Activated CD8-positive, alpha-beta memory T cell treated with anti-CD3 and anti-CD28 coated beads, Interleukin-2, amount 10 ng/mL, durations not matched to agents 7 days and 5 days (primary cell): ENCODE measurements at regions of chr11 and their contacts with region 1.

Region 1: DNA sequence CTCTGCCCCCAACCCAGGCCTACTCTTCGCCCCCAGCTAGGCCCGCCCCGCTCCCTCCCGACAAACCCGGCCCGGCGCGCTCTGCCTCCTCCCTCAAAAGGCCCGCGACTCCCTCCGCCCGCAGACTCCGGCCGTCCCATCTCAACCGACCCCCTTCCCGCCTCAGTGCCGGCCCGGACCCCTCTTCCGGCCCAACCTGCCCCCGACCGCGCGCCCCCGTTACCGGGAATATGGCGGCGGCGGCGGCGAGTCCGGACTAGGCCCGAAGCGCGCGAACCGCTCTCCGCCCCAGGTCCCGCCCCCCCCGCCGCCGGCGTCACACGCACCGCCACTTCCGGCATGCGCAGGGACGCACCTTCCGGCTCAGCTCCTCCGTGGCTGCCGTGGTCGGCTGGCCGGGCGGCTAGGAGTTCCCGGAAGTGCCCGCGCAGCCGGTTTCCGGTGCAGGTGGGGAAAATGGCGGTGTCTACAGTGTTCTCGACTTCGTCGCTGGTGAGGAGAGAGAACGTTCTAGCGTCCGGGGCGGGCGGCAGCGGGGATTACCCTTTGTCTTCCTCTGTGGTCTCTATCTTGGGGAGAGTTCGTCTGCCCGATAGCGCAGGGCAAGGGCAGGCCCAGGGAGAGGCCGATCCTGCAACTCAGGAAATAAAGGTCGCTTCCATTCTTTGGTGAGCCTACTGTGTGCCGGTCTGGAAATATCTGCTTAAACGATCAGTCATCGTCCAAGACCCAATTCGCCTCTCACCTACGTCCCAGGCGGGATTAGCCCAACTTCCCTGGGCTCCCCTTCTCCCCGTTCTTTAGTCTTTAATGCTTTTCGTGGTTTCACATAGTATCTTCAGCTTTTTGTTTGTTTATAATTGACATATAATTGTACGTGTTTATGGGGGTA is at the starts of genes CPSF7 and SDHAF2:
- DNase-seq: peak; percentile 98
- ATAC-seq: peak; percentile 88
- H3K4me3 Mint-ChIP-seq: peak within 1 kb of the TSS; percentile 98
- H3K27ac Mint-ChIP-seq: peak within 1 kb of the TSS; percentile 100
- H3K4me1 Mint-ChIP-seq: peaks cover 61% of the 10 kb centered on the region
- H3K27me3 Mint-ChIP-seq: no peaks in the 10 kb centered on the region
- total RNA-seq, gene CPSF7: 103 to 118 TPM
- total RNA-seq, gene SDHAF2: 37.6 to 57.6 TPM

Region 2: DNA sequence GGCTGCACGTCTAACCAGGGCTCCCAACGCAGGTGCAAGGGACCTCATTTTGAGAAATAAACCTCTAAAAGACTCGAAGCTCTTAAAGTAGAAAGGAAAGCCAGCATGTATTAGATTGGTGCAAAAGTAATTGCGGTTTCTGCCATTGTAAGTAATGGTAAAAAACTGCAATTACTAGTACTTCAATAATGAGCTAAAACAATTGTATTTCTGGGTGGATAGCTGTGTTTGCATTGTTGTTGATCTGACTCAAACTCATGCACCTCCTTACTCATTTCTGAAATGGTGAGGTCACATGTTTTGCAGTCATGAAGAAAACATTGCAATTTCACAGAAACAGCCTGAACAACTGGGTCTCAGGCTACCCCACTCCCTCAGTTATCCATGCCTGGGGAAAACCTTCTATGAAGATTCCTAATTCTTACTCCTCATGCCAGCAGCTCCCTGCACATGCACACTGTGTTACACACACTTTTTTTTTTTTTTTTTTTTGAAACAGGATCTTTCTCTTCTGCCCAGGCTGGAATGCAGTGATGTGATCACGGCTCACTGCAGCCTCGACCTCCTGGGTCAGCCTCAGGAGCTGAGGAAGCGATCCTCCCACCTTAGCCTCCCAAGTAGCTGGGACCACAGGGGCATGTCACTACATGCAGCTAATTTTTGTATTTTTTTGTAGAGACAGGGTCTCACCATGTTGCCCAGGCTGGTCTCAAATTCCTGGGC is 159.4 kb before region 1 on chr11:
- CTCF ChIA-PET with region 1: no interaction called
- DNase-seq: no peak
- ATAC-seq: peak; percentile 72
- H3K4me3 Mint-ChIP-seq: no peak overlapping the region
- H3K27ac Mint-ChIP-seq: peak overlapping the region; percentile 56
- H3K4me1 Mint-ChIP-seq: peaks cover 13% of the 10 kb centered on the region
- H3K27me3 Mint-ChIP-seq: no peaks in the 10 kb centered on the region

Region 3: DNA sequence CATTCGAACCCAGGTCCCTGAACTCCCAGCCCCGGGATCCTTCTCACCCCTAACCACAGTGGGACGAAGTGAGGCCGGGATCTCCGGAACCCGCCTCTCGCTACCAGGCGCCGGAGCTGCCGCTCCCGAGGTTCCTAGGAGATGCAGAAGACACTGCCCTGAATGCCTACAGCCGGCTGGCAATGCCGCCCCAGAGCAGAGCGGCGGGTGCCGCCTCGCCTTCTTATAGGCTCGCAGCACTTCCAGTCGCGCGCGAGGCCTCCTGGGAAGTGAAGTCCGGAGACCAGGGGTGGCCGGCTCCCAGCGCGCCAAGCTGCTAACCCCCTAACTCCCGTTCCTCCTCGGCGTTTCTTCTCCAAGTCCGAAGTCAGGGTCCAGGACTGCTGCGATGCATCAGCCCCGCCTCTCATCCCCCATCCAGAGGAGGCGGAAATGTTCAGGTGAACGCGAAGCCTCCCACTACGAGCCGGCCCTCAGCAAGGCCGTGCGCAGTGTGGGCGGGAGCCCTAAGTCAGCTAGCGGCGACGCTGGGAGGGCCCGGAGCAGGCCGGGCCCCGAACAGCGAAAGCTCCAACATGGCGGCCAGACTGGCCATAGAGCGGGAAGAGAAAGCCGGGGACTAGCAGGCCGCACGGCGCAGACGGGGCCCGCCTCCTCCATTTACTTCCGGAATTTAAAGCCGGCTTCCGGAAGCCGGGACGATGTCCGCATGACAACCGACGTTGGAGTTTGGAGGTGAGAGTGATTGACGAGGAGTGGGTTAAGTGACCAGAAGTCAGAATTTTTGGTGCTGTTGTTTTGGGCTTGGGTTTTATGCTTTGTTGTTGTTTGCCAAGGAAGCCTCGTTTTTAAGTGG is 68.0 kb before region 1 on chr11 and contains the starts of genes CYB561A3 and TMEM138:
- CTCF ChIA-PET with region 1: interaction called, 10 read pairs
- DNase-seq: peak; percentile 96
- ATAC-seq: peak; percentile 95
- H3K4me3 Mint-ChIP-seq: peak within 1 kb of the TSS; percentile 99
- H3K27ac Mint-ChIP-seq: peak within 1 kb of the TSS; percentile 98
- H3K4me1 Mint-ChIP-seq: peaks cover 40% of the 10 kb centered on the region
- H3K27me3 Mint-ChIP-seq: no peaks in the 10 kb centered on the region
- total RNA-seq, gene CYB561A3: 43.9 to 51.2 TPM
- total RNA-seq, gene TMEM138: 48.3 to 60.6 TPM

Region 4: DNA sequence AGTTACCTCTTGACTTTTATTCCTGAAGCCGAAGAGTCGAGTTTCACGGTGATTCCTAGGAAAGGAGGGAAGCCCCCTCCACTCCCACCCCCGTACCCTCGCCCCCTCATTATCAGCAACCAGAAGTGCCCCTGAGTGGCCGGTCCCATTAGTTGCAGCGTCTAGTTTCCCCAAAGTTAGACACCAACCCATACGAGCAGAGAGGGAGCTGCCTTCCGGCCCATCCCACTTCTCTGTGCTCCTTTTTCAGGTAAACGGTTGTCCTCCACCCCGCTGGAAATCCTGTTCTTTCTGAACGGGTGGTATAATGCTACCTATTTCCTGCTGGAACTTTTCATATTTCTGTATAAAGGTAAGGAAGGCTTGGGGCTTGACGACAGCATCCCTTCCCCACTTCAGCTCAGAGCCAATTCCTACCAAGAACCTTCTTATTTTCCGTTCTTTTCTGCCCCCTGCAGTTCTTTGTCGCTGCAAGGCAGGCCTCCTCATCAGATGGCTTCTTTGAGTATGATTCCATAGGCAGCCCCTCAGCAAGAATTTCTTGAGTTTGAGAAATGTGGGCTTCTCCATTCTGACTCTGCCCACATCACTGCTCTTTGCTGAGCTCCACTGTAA is 36.8 kb before region 1 on chr11:
- CTCF ChIA-PET with region 1: interaction called, 11 read pairs
- DNase-seq: no peak
- ATAC-seq: no peak
- H3K4me3 Mint-ChIP-seq: peak overlapping the region; percentile 90
- H3K27ac Mint-ChIP-seq: peak overlapping the region; percentile 96
- H3K4me1 Mint-ChIP-seq: peaks cover 22% of the 10 kb centered on the region
- H3K27me3 Mint-ChIP-seq: no peaks in the 10 kb centered on the region

Region 5: DNA sequence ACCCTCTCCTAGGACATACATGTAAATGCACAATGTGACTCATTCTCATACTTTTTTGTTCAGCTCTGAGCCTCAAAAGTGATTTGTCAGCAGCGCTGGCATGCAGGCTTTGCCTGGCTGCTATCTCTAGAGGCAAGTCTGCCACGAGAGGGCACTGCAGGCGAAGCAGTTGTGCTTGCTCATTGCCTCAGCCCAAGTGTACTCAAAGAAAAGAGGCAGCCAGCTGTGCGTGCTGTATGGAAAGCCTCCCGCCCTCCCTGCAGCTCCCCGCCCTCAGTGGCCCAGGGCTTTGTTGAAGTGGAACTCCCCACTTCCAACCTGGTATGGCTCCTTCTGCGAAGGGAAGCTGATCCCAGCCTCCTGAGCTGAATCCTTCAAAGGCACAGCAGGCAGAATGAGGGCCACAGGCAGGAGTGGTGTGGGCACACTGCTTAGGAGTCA is 16.3 kb after region 1 on chr11:
- CTCF ChIA-PET with region 1: interaction called, 63 read pairs
- DNase-seq: peak; percentile 87
- ATAC-seq: peak; percentile 88
- H3K4me3 Mint-ChIP-seq: no peak overlapping the region
- H3K27ac Mint-ChIP-seq: no peak overlapping the region
- H3K4me1 Mint-ChIP-seq: peaks cover 16% of the 10 kb centered on the region
- H3K27me3 Mint-ChIP-seq: no peaks in the 10 kb centered on the region

Region 6: DNA sequence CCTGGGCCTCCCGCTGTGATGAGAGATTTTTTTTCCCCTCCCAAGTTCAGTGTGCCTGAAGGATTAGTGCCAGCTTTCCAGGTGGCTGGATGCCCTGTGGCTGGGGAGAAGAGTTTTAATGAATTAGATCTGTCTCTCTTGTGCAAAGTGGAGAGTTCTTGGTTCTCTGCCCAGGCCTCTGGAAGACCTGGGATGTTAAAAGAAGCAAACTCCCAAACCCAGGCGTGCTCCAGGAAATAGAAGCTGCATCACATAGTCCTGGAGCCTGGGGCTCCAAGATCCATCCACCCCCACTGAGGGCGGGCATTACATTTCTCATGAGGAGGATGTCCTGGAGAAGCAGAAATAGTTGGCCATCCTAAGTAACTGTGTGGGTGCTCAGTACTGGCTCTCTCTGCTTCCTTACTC is 30.5 kb after region 1 on chr11:
- CTCF ChIA-PET with region 1: interaction called, 15 read pairs
- DNase-seq: no peak
- ATAC-seq: no peak
- H3K4me3 Mint-ChIP-seq: no peak overlapping the region
- H3K27ac Mint-ChIP-seq: no peak overlapping the region
- H3K4me1 Mint-ChIP-seq: no peaks in the 10 kb centered on the region
- H3K27me3 Mint-ChIP-seq: no peaks in the 10 kb centered on the region

Region 7: GRCh38 chr11:61477727-61478148 is 47.8 kb after region 1 on chr11:
- CTCF ChIA-PET with region 1: interaction called, 10 read pairs
- DNase-seq: peak; percentile 61
- ATAC-seq: peak; percentile 37
- H3K4me3 Mint-ChIP-seq: no peak overlapping the region
- H3K27ac Mint-ChIP-seq: no peak overlapping the region
- H3K4me1 Mint-ChIP-seq: peaks cover 2% of the 10 kb centered on the region
- H3K27me3 Mint-ChIP-seq: no peaks in the 10 kb centered on the region

Region 8: GRCh38 chr11:61516675-61517572 is 87.0 kb after region 1 on chr11:
- CTCF ChIA-PET with region 1: interaction called, 10 read pairs
- DNase-seq: peak; percentile 66
- ATAC-seq: peak; percentile 72
- H3K4me3 Mint-ChIP-seq: no peak overlapping the region
- H3K27ac Mint-ChIP-seq: no peak overlapping the region
- H3K4me1 Mint-ChIP-seq: no peaks in the 10 kb centered on the region
- H3K27me3 Mint-ChIP-seq: peaks cover 2% of the 10 kb centered on the region